ENCODE measurements at regions of chr22 and their contacts with region 1.

Region 1: DNA sequence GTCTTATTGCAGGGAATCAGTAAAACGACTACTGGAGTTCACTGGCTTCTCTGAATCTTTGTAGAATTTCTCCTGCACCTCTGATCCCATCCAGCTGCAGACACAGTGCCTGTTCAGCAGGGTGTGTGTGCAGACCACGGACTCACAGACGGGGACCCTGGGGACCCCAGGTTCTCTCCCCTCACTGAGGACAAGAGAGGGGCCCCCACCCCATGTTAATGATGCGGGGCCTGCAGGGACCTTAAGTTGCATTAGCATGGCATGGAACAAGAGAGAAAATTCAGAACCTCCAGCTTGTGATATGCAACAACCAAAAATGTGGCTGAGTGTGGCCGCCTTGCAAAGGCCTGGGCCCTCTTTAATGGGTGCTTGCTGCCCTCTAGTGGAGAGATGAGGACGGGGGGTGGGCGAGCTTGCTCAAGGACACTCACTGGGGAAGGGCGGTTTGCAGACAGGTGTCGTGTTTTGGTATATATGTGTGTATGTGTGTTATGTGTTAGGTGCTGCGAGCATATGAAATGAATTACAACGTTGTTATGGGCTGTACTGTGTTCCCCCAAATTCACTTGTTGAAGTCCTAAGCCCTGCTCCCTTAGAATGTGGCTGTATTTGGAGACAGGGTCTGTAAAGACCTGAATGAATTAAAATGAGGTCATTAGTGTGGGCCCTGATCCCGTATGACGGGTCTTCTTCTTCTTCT is 84.4 kb upstream of the SEPTIN5 start:
- DNase-seq: peak; percentile 38
- H3K4me3 ChIP-seq: no peak overlapping the region
- H3K27ac ChIP-seq: no peak overlapping the region
- H3K4me1 ChIP-seq: peaks cover 12% of the 10 kb centered on the region
- H3K27me3 ChIP-seq: no peaks in the 10 kb centered on the region
- CTCF ChIP-seq: peak; percentile 92 to 96

Region 2: DNA sequence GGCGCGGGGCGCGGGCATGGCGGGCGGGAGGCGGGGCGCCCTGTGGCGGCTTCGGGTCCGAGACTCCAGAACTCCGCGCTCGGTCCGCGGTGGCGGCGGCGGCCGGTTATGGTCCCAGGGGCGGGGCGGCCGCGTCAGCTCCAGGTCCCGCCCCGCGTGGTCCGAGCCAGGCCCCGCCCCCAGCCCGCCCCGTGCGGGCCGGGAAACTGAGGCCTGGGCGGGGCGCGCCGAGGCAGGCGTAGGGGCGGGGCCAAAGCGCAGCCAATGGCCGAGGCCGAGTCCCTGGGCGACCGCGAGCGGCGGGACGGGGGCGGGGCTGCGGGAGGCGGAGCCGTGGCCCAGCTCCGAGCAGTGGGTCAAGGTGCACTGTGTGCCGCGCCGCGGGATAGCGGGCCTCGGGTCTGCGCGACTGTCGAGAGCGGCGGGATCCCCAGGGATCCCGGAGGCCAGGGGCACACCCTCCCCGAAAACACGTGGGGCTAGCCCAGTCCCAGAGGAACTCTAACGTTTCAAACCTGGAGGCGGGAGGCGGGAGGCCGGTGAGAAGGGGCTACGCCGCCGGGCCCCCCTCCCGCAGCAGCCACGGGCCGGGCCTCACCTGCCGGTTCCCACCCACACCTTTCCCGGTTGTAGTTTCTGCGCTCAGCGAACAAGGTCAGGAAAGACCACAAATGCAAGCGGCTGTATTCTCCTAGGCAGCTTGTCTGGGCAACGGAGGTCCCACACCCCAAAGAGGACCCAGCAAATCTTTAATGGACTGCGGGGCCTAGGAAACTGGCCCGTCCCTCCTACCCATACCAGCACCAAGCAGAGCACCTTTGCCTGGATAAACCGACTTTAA is 451.0 kb before region 1 on chr22 and contains the start of gene SLC25A1:
- CTCF ChIA-PET with region 1: interaction called, 3 read pairs
- dilution Hi-C with region 1: no loop called
- in situ Hi-C with region 1: loop called in 1 of 2 experiments (anchors 25 kb)
- intact Hi-C with region 1: loop called (anchors 5 kb)
- DNase-seq: peak; percentile 88
- H3K4me3 ChIP-seq: peak within 1 kb of the TSS; percentile 64 to 77 (median 76)
- H3K27ac ChIP-seq: peak within 1 kb of the TSS; percentile 56
- H3K4me1 ChIP-seq: peaks cover 38% of the 10 kb centered on the region
- H3K27me3 ChIP-seq: no peaks in the 10 kb centered on the region
- CTCF ChIP-seq: no peak
- total RNA-seq, gene SLC25A1: 70.5 to 130 TPM

Region 3: DNA sequence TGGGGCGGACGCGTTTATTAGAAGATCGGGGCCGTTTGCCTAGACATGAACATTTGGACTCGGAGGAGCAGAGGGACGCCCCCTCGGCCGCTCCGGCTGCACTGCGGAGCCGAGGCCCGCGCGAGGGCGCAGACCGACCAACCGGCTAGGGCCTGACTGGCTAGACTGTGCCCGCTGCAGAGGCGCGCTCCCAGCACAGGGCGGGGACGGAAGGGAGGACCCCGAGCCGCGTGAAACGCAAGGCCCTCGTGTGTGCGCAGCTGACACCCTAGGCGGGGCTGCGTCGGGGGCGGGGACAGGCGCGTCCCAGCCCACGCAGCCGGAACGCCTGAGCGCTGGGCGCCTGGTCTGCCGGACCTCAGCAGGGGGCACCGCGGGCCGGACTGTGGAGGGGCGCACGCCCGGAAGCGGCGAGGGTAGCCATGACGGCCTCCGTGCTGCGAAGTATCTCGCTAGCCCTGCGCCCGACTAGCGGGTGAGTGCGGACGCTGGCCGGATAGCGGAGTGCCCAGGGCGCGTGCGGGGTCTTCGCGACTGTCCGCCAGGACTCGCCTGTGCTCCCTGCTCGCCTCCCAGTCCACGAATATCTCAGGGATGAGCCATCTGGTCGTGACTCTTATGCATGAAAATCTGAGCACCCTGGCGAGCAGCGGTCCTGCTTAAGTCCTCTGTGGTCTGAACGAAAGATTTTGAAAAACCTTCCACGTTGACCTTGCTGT is 197.6 kb before region 1 on chr22 and contains the start of gene MRPL40:
- CTCF ChIA-PET with region 1: no interaction called
- dilution Hi-C with region 1: no loop called
- in situ Hi-C with region 1: no loop called
- intact Hi-C with region 1: loop called (anchors 1 kb)
- DNase-seq: peak; percentile 92
- H3K4me3 ChIP-seq: peak within 1 kb of the TSS; percentile 70 to 95 (median 93)
- H3K27ac ChIP-seq: peak within 1 kb of the TSS; percentile 63
- H3K4me1 ChIP-seq: peaks cover 17% of the 10 kb centered on the region
- H3K27me3 ChIP-seq: no peaks in the 10 kb centered on the region
- CTCF ChIP-seq: no peak
- total RNA-seq, gene MRPL40: 22.8 to 40.0 TPM

Region 4: DNA sequence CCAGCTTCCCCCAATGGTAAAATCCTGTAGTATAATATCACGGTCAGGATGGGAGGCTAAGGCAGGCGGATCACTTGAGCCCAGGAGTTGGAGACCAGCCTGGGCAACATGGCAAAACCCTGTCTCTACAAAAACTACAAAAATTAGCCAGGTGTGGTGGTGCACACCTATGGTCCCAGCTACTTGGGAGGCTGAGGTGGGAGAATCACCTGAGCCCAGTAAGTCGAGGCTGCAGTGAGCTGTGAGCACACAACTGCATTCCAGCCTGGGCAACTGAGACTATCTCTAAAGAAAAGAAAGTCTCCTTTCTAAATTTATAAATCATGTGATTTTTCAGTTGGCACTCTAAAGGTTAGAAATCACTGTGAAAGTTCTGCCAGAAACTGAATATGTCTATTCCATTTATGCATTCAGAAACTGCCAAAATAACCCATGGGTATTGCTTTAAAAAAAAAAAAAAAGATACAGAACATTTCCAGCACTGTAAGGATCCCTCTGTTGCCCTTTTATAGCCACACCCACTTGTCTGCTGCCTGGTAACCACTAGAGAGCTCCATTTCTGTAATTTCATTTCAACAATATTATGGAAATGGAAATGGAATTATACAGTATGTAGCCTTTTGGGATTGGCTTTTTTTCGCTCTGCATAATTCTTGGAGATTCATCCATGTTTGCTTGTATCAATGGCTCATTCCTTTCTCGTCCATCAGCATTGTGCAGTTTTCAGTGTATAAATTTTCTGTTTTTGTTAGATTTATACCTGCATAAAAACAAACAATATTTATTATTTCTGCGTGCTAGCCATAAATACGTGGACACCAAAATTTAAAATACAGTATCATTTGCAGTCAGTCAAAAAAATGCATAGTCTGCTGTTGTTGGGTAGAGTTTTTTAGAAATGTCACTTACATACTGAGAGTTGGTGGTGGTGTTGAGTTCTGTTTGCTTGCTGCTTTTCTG is 140.7 kb before region 1 on chr22:
- CTCF ChIA-PET with region 1: interaction called, 11 read pairs
- dilution Hi-C with region 1: loop called (anchors 5 kb)
- in situ Hi-C with region 1: loop called in 1 of 2 experiments (anchors 5 kb)
- intact Hi-C with region 1: loop called (anchors 1 kb)
- DNase-seq: no peak
- H3K4me3 ChIP-seq: no peak overlapping the region
- H3K27ac ChIP-seq: no peak overlapping the region
- H3K4me1 ChIP-seq: no peaks in the 10 kb centered on the region
- H3K27me3 ChIP-seq: no peaks in the 10 kb centered on the region
- CTCF ChIP-seq: peak in 1 of 2 donors; percentile 36

Region 5: GRCh38 chr22:19503869-19504268 is 126.0 kb before region 1 on chr22:
- CTCF ChIA-PET with region 1: no interaction called
- dilution Hi-C with region 1: no loop called
- in situ Hi-C with region 1: loop called in 1 of 2 experiments (anchors 10 kb)
- intact Hi-C with region 1: no loop called
- DNase-seq: no peak
- H3K4me3 ChIP-seq: no peak overlapping the region
- H3K27ac ChIP-seq: no peak overlapping the region
- H3K4me1 ChIP-seq: no peaks in the 10 kb centered on the region
- H3K27me3 ChIP-seq: no peaks in the 10 kb centered on the region
- CTCF ChIP-seq: no peak

Region 6: DNA sequence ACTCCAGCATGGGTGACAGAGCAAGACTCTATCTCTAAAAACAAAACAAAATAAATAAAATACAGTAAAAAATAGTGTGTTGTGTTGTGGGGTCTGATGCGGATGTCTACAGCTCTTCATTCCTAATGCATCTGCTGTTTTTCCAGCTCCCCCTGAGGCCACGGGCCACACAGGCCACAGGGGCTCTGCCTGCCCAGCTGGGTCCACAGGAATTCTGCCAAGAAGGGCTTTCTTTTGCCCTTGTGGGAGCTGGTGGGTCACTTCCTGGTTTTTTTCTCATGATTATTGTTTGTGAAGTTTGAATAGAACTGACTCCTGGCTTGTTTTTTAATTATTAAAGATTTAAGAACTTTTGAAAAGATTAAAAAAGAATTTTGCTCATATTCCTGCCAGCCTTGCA is 38.3 kb before region 1 on chr22:
- CTCF ChIA-PET with region 1: no interaction called
- dilution Hi-C with region 1: loop called (anchors 5 kb)
- in situ Hi-C with region 1: no loop called
- intact Hi-C with region 1: no loop called
- DNase-seq: no peak
- H3K4me3 ChIP-seq: no peak overlapping the region
- H3K27ac ChIP-seq: no peak overlapping the region
- H3K4me1 ChIP-seq: no peaks in the 10 kb centered on the region
- H3K27me3 ChIP-seq: no peaks in the 10 kb centered on the region
- CTCF ChIP-seq: no peak

Region 7: GRCh38 chr22:19717691-19718455 is 88.0 kb after region 1 on chr22:
- CTCF ChIA-PET with region 1: no interaction called
- dilution Hi-C with region 1: no loop called
- in situ Hi-C with region 1: no loop called
- intact Hi-C with region 1: loop called (anchors 1 kb)
- DNase-seq: peak; percentile 55
- H3K4me3 ChIP-seq: peak overlapping the region; percentile 32 to 61 (median 51)
- H3K27ac ChIP-seq: no peak overlapping the region
- H3K4me1 ChIP-seq: peaks cover 20% of the 10 kb centered on the region
- H3K27me3 ChIP-seq: no peaks in the 10 kb centered on the region
- CTCF ChIP-seq: peak; percentile 26 to 76